Transverse colon (tissue), 4 donors: ENCODE measurements at regions of chr10 and their contacts with region 1.

Region 1: GRCh38 chr10:72285972-72286521 is 12.3 kb downstream of the DDIT4 start:
- DNase-seq: no peak
- H3K4me3 ChIP-seq: no peak overlapping the region
- H3K27ac ChIP-seq: no peak overlapping the region
- H3K4me1 ChIP-seq: peaks cover 0 to 6% (median 2%) of the 10 kb centered on the region in 4 donors
- H3K27me3 ChIP-seq: no peaks in the 10 kb centered on the region
- CTCF ChIP-seq: no peak
- EP300 ChIP-seq: no peak
- POLR2A ChIP-seq: no peak

Region 2: DNA sequence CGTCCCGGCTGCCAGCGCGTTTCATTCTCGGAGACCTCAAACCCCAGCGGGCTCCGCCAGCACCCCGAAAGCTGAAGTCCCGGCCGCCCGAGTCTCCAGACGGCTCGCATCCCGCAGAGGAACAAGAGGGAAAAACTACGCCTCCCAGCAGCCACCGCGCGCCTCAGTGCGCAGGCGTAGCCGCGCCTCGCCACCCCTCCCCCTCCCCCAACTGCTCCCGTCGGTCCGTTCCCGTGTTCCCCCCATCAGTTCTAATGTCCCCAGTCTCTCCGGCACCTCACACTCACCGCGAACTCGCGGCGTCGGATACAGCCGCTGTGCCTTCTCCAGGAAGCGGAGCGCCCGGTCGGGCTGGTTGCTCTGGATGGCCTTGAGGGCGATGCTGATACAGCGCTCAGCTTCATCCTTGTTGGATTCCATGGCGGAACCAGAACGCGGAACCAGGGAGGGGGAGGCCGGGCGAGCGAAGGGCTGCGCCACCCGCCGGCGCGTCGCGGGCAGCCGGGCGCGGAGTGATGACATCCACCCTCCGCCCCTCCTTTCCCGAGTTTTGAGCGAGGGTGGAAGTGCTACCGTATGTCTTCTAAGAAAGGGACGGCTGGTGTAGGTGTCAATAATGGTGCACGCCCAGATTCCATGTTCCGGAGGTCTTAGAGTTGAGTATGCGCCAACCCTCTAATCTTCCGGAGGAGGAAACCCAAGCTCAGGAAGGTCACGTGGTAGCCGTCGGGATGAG is 68.6 kb after region 1 on chr10 and contains the start of gene DNAJB12:
- in situ Hi-C with region 1: no loop called
- intact Hi-C with region 1: loop called (anchors 2 kb)
- DNase-seq: peak; percentile 93
- H3K4me3 ChIP-seq: peak within 1 kb of the TSS; percentile 62 to 99 (median 74)
- H3K27ac ChIP-seq: peak within 1 kb of the TSS; percentile 91 to 95 (median 95)
- H3K4me1 ChIP-seq: peaks cover 9 to 28% (median 20%) of the 10 kb centered on the region in 4 donors
- H3K27me3 ChIP-seq: no peaks in the 10 kb centered on the region
- CTCF ChIP-seq: no peak
- EP300 ChIP-seq: no peak
- POLR2A ChIP-seq: peak; percentile 89
- total RNA-seq, gene DNAJB12: 33.7 to 69.2 (median 38.0) TPM